ENCODE measurements at regions of chr6 and their contacts with region 1.

Region 1: DNA sequence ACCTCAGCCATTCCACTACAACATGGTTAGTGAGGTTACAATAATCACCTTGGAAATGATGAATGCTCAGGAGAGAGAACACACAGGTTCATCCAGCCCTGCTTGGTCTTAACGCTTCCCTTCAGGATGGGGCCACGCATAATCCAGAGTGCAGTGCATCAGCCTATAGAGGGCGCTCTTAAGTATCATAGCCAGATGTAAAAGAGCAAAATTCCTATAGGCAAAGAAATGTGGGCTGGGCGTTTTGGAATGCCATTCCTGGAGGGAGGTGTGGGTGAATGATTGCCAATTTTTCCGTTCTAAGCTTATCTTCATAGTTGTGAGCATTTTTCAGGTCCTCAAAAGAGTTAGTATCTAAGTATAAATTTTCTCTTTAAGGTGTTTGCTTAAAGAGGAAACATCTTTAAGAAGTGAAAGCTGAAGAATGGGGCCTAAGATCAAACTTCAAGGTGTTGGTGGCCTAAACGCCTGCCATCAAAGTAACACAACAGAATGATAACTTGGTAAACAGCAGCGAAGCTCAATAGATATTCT is 1.8 kb downstream of the RIPOR2 start:
- DNase-seq: no peak
- H3K4me3 Mint-ChIP-seq: peak overlapping the region; percentile 89
- H3K27ac Mint-ChIP-seq: peak overlapping the region; percentile 92
- H3K4me1 Mint-ChIP-seq: peaks cover 90% of the 10 kb centered on the region
- H3K27me3 Mint-ChIP-seq: no peaks in the 10 kb centered on the region

Region 2: DNA sequence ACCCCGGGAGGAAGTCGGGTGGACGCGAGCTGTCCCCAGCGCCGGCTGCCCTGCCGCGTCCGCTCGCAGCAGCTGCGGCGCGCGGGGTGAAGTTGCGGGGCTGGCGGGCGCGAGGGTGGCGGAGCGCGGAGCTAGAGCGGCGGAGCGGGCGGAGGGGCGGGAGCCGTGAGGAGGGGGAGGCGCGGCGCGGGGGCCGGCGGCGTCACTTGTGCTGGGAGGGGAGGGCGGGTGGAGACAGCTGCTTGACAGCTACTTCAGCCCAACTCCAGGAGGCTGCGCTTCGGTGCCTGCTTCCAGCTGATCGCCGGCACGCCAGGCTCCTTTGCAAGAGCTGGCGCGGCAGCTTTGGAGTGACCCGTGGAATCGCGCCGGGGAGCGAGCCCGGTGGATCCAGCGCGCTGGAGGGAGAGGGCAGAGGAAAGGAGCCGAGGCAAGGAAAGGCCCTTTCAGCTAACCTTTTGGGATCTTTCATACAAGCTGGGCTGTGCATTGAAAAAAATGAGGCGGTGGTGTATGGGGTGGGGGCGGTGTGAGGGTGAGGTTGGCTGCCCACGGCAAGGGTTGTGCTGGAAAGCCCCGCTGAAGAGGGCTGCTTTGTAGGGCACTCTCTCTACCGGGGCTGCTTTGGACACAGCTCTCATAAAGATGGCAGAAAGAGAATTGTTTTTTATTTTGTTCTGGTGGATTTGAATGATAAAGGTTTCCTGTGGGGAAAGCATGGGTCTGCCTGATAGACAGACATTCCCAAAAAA is 22.8 kb before region 1 on chr6:
- intact Hi-C with region 1: loop called (anchors 2 kb)
- DNase-seq: no peak
- H3K4me3 Mint-ChIP-seq: peak overlapping the region; percentile 79
- H3K27ac Mint-ChIP-seq: peak overlapping the region; percentile 61
- H3K4me1 Mint-ChIP-seq: peaks cover 70% of the 10 kb centered on the region
- H3K27me3 Mint-ChIP-seq: no peaks in the 10 kb centered on the region

Region 3: DNA sequence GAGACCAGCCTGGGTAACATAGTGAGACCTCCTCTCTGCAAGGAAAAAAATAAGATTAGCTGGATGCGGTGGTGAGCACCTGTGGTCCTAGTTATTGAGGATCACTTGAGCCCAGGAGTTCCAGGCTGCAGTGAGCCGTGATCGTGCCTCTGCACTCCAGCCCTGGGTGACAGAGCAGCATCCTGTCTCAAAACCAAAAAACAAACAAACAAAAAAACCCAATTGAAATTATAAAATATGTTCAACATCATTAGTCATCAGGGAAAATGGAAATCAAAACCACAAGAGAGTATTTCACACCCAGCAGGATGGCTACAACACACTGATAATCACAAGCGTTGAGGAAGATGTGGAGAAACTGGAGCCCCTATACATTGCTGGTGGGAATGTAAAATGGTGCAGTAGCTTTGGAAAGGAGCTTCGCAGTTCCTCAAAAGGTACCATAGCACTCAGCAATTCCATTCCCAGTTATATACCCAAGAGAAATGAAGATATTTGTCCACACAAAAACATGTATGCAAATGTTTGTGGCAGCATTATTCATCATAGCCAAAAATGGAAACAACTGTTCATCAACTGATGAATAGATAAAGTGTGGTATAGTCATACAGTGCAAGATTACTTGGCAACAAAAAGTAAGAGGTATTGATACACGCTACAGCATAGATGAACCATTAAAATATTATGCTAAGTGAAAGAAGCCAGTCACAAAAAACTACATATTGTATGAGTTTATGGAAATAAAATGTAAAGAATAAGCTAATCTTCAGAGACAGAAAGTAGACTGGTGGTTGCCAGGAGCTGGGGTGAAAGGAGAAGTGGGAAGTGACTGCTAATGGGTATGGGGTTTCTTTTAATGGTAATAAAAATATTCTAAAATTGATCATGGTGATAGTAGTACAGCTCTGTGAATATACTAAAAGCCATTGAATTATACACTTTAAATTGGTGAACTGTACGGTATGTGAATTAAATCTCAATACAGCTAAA is 40.5 kb after region 1 on chr6:
- intact Hi-C with region 1: loop called (anchors 1 kb)
- DNase-seq: peak; percentile 25
- H3K4me3 Mint-ChIP-seq: peak overlapping the region; percentile 13
- H3K27ac Mint-ChIP-seq: peak overlapping the region; percentile 90
- H3K4me1 Mint-ChIP-seq: peaks cover 35% of the 10 kb centered on the region
- H3K27me3 Mint-ChIP-seq: no peaks in the 10 kb centered on the region

Region 4: DNA sequence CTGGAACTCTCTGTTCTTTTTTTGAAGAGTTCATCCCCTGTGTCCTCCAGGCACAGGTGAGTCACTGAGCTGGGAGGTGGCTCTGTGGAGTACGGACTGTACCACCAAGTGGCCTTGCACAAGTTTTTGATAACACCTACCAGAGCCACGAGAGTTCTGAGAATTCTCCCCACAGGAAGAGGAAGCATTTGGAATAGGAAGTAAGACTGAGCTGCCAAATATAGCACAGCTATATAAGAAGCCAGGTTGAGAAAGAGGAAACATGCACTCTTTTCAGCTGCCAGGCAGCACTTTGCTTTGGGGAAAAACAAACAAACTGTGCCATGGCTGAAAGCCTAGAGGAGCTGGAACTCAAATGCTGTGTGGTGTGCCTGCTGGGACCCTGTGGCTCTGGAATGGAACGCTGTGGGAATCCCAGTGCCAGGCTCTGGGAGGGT is 72.6 kb after region 1 on chr6:
- intact Hi-C with region 1: loop called (anchors 1 kb)
- DNase-seq: peak; percentile 41
- H3K4me3 Mint-ChIP-seq: peak overlapping the region; percentile 27
- H3K27ac Mint-ChIP-seq: peak overlapping the region; percentile 83
- H3K4me1 Mint-ChIP-seq: peaks cover 68% of the 10 kb centered on the region
- H3K27me3 Mint-ChIP-seq: no peaks in the 10 kb centered on the region